ENCODE measurements at regions of chr9 and their contacts with region 1.

Region 1: DNA sequence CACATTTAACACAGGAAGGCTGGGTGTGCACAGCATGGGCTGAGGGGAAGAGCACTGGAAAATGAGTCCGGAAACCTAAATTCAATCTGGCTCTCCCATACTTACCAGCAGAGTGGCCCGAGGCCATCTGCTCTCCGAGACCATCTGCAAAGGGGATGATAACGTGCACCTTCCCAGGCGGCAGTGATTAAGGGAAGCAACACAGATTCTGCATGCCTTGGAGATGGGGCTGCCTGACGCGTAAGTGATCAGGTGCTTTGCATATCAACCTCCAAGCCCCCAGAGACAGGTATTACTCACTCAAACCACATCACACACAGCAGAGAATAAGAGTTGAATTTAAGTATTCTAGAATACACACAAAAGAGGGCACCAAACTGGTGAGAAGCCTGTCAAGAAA is 9.1 kb downstream of the EPB41L4B start:
- DNase-seq: no peak
- ATAC-seq: no peak
- H3K4me3 ChIP-seq: no peak overlapping the region
- H3K27ac ChIP-seq: no peak overlapping the region
- H3K4me1 ChIP-seq: peaks cover 0 to 47% (median 21%) of the 10 kb centered on the region in 9 donors
- H3K27me3 ChIP-seq: peaks cover 0 to 38% (median 20%) of the 10 kb centered on the region in 7 donors
- CTCF ChIP-seq: no peak

Region 2: DNA sequence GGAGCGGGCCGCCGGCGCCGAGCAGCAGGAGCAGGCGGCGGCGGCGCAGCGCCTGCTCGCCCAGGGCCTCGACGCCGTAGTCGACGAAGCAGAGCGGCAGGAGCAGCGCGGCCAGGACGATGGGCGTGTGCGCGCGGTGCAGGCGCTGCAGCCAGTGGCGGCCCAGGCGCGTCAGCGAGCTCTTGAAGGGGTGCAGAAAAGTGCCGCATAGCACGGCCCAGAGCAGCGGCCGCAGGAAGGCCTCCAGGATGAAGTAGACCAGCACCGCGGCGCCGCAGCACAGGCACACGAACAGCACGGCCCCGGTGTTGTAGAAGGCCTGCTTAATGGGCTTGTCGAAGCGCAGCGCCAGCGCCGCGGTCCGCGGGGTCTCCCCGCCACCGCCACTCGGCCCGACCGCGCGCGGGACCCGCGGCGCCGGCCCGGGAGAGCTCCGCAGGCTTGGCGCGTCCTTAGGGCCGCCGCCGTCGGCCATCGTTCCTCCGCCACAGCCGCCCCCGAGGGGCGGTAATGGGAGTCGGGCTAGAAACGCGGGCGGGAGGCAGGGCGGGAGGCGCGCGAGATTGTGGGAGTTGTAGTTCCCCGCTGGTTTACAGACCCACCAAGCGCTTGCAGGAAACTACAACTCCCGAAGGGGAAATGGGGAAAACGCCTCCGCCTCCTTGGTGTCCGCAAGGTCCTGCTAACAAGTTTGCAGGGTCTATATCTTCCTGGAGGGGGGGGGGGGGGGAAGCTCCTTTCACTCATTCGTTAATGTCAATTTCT is 192.1 kb before region 1 on chr9 and contains the start of gene TMEM245:
- intact Hi-C with region 1: loop called in 1 of 10 experiments (anchors 10 kb)
- DNase-seq: peak; percentile 94 to 99
- ATAC-seq: peak; percentile 95 to 99 (median 98)
- H3K4me3 ChIP-seq: peak within 1 kb of the TSS; percentile 68 to 99 (median 92)
- H3K27ac ChIP-seq: peak within 1 kb of the TSS; percentile 44 to 99 (median 94)
- H3K4me1 ChIP-seq: peaks cover under 1 to 51% (median 38%) of the 10 kb centered on the region in 9 donors
- H3K27me3 ChIP-seq: no peaks in the 10 kb centered on the region
- CTCF ChIP-seq: peak in 3 of 9 donors; percentile 3 to 23 (median 22)
- total RNA-seq, gene TMEM245: 84.2 to 152 (median 99.9) TPM

Region 3: GRCh38 chr9:109274884-109275730 is 36.6 kb before region 1 on chr9:
- intact Hi-C with region 1: loop called in 1 of 10 experiments (anchors 5 kb)
- DNase-seq: peak in 1 of 2 donors; percentile 38
- ATAC-seq: peak in 6 of 8 donors; percentile 17 to 63 (median 41)
- H3K4me3 ChIP-seq: no peak overlapping the region
- H3K27ac ChIP-seq: peak overlapping the region in 4 of 10 donors; percentile 28 to 41 (median 32)
- H3K4me1 ChIP-seq: peaks cover 0 to 35% (median 4%) of the 10 kb centered on the region in 9 donors
- H3K27me3 ChIP-seq: no peaks in the 10 kb centered on the region
- CTCF ChIP-seq: no peak

Region 4: DNA sequence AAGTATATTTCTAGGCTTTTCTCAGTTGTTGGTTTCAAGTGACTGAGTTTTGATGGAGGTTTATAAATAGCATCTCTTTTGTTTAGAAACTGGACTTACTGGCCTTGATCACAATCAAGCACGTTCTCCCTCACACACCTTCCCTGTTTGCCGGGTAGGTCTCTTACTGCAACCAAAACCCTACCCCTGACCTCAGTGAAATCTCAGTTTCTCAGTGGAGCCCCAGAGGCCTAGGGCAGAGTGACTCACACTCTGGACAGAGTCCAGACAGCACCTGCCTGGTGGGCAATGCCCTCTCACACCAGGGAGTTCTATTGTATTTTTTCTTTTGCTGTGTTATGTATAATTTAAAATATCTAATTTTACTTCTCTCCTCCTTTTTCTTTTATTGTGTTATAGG is 57.6 kb after region 1 on chr9:
- intact Hi-C with region 1: no loop called
- DNase-seq: no peak
- ATAC-seq: no peak
- H3K4me3 ChIP-seq: no peak overlapping the region
- H3K27ac ChIP-seq: no peak overlapping the region
- H3K4me1 ChIP-seq: no peaks in the 10 kb centered on the region
- H3K27me3 ChIP-seq: no peaks in the 10 kb centered on the region
- CTCF ChIP-seq: no peak